ENCODE measurements at regions of chr5 and their contacts with region 1.

Region 1: DNA sequence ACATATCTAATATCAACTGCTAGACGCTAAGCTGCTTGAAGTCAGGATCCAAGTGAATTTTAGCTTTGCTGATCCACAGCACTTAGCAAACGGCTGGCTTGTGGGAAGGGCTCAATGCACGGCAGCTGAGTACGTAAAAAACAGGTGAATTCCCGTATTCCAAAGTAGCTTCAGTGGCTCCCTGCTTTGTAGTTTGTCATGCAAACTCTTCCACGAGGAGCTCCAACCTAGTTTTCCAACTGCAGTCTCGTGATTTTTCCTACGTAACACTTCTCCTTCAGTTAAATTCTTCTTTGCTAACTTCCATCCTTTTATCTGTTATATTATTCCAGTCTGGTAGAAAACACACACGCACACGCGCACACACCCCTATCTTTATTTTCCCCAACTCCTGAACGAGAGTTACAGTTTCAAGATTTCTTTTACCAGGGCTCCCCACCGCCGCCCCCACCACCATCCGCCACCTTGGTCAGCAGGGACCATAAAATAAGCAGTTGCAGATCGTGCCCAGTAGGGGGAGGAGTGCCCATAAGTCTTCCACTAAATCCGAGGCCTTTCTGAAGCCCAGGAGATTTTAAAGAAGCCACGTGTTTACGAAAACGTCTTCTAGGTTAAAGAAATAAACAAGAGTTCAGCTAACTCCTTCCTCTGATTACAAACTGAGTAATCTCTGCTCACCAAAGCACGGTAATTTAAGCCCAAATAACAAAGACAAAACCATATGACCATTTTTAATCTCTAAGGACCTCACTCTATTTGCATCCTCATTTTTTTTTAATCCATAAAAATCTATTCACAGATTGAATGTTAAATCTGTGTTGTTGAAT is 34.8 kb upstream of the TRIO start:
- DNase-seq: peak in 6 of 9 donors; percentile 4 to 37 (median 20)
- ATAC-seq: peak; percentile 80
- H3K4me3 ChIP-seq: no peak overlapping the region
- H3K4me3 Mint-ChIP-seq: peak overlapping the region in 6 of 10 donors; percentile 2 to 39 (median 22)
- H3K27ac ChIP-seq: no peak overlapping the region
- H3K27ac Mint-ChIP-seq: peak overlapping the region in 1 of 9 donors; percentile 0
- H3K4me1 ChIP-seq: no peaks in the 10 kb centered on the region
- H3K4me1 Mint-ChIP-seq: peaks cover 0 to 19% (median 4%) of the 10 kb centered on the region in 7 donors
- H3K27me3 ChIP-seq: no peaks in the 10 kb centered on the region
- H3K27me3 Mint-ChIP-seq: peaks cover 9 to 27% (median 23%) of the 10 kb centered on the region in 5 donors

Region 2: DNA sequence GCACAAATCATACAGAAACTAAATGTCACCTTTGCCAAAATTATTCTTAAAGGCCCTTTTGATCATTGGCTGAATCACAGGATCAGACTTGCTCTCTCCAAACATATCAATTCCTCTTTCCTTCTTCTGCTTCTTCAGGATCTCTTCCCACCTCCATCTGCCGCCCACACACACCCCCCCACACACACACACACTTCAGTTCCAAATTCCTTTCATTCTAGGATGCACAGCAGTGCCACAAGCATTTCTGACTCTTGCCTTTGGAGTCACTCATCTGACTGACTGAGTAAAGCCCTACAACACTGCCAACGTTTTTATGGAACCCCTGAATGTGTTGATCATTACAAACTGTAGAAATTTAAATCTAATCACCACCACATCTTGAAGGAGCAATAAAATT is 186.8 kb before region 1 on chr5:
- CTCF ChIA-PET with region 1: no interaction called
- POLR2A ChIA-PET with region 1: no interaction called
- intact Hi-C with region 1: no loop called
- DNase-seq: no peak
- ATAC-seq: no peak
- H3K4me3 ChIP-seq: no peak overlapping the region
- H3K4me3 Mint-ChIP-seq: no peak overlapping the region
- H3K27ac ChIP-seq: no peak overlapping the region
- H3K27ac Mint-ChIP-seq: no peak overlapping the region
- H3K4me1 ChIP-seq: no peaks in the 10 kb centered on the region
- H3K4me1 Mint-ChIP-seq: no peaks in the 10 kb centered on the region
- H3K27me3 ChIP-seq: no peaks in the 10 kb centered on the region
- H3K27me3 Mint-ChIP-seq: no peaks in the 10 kb centered on the region

Region 3: DNA sequence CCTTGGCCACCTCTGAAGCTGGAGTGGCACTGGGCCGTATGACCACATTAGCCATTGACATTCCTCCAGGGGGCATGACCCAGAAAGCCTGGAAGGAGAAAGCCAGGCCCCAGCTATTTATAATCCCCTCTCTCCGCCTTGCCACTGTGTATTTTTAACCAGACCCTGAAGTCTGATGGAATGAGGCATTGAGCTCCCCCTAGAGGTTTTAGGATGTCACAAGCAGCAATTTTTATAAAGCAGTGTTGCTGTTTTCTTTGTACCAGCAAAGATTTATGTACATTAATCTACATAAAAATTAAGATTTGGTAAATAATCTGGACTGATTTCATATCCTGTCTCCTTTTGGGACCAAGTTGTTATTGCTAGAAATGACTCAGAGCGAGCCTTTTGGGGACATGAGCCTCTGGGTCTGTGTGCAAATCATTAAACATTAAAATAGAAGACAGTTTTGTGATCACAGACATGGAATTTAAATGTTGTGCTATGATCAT is 161.9 kb after region 1 on chr5:
- CTCF ChIA-PET with region 1: interaction called, 4 read pairs
- POLR2A ChIA-PET with region 1: no interaction called
- intact Hi-C with region 1: loop called in 1 of 2 experiments (anchors 1 kb)
- DNase-seq: peak in 2 of 9 donors; percentile 12 to 22
- ATAC-seq: peak; percentile 57
- H3K4me3 ChIP-seq: no peak overlapping the region
- H3K4me3 Mint-ChIP-seq: no peak overlapping the region
- H3K27ac ChIP-seq: no peak overlapping the region
- H3K27ac Mint-ChIP-seq: no peak overlapping the region
- H3K4me1 ChIP-seq: no peaks in the 10 kb centered on the region
- H3K4me1 Mint-ChIP-seq: peaks cover 0 to 5% (median 0%) of the 10 kb centered on the region in 7 donors
- H3K27me3 ChIP-seq: no peaks in the 10 kb centered on the region
- H3K27me3 Mint-ChIP-seq: peaks cover 12 to 38% (median 36%) of the 10 kb centered on the region in 5 donors

Measured in naive thymus-derived CD4-positive, alpha-beta T cell (primary cell).